ENCODE measurements at regions of chr15 and their contacts with region 1.

Region 1: DNA sequence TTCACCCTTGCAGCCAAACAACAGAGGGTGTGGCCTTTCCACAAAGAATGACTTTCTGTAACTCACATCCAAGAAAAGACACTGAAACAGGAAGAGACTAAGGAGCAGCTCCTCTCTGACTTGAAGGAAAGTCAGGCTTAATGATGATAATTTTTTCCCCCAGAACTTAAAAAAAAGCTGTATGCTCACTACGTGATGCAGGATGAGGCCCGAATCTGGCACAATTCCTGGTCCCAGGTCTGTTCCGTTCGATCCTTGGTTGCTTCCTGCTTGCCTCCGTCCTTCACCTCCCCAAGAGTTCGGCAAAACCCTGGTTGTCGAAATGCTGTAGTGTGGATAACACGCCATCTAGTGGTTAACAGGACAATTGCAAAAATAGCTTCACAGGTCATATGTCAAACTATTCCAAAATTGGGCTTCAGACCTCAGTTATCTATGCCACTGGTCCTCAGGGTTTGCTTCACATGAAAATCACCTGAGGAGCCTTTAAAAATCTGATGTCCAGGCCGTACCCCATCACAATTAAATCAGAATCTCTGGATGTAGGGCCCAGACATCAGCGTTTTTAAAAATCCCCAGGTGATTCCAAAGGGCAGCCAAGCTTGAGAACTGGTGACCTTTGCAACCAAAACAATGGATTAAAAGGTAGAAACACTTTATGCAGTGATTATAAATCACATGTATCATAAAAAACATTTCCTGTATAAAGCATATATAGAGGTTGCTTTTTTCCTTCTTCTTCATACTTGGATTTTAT is 28.1 kb upstream of the SYNM start:
- DNase-seq: peak; percentile 84
- H3K4me3 ChIP-seq: peak overlapping the region; percentile 59
- H3K27ac ChIP-seq: no peak overlapping the region
- H3K4me1 ChIP-seq: peaks cover 8% of the 10 kb centered on the region
- CTCF ChIP-seq: peak; percentile 94

Region 2: GRCh38 chr15:98442379-98442833 is 634.3 kb before region 1 on chr15:
- CTCF ChIA-PET with region 1: no interaction called
- POLR2A ChIA-PET with region 1: no interaction called
- intact Hi-C with region 1: loop called (anchors 2 kb)
- DNase-seq: peak; percentile 57
- H3K4me3 ChIP-seq: no peak overlapping the region
- H3K27ac ChIP-seq: no peak overlapping the region
- H3K4me1 ChIP-seq: no peaks in the 10 kb centered on the region
- CTCF ChIP-seq: peak; percentile 87

Region 3: DNA sequence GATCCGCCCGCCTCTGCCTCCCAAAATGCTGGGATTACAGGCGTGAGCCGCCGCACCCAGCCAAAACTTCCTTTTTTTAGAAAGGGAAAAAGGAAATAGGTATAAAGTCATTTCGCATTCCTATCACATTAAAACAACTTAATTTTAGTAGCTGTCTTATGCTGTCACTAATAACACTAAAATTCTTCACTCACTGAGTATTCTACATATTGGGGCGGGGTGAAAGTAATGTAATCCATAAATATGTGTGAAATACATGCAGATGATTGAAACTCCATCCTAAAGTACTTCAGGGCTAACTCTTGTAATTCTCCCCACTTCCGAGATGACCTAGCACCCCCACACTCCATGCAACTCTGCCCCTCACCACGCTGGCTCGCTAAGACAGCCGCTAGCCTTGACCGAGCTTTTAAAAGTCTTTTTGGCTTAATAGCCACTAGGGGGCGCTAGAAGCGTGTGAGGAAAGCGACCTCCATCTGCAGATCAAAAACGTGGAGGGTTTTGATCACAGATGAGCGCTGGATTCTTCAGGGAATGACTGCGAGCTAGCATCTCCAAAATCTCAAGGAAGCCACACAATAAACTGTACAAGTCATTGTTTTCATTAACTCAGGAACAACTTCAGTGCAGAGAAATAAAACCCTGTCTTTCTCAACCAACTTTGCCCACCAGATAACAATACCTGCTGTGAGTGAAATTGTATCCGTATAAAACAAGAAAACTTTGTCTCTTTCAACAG is 557.7 kb before region 1 on chr15:
- CTCF ChIA-PET with region 1: no interaction called
- POLR2A ChIA-PET with region 1: no interaction called
- intact Hi-C with region 1: loop called (anchors 1 kb)
- DNase-seq: peak; percentile 75
- H3K4me3 ChIP-seq: no peak overlapping the region
- H3K27ac ChIP-seq: no peak overlapping the region
- H3K4me1 ChIP-seq: no peaks in the 10 kb centered on the region
- CTCF ChIP-seq: peak; percentile 91

Region 4: DNA sequence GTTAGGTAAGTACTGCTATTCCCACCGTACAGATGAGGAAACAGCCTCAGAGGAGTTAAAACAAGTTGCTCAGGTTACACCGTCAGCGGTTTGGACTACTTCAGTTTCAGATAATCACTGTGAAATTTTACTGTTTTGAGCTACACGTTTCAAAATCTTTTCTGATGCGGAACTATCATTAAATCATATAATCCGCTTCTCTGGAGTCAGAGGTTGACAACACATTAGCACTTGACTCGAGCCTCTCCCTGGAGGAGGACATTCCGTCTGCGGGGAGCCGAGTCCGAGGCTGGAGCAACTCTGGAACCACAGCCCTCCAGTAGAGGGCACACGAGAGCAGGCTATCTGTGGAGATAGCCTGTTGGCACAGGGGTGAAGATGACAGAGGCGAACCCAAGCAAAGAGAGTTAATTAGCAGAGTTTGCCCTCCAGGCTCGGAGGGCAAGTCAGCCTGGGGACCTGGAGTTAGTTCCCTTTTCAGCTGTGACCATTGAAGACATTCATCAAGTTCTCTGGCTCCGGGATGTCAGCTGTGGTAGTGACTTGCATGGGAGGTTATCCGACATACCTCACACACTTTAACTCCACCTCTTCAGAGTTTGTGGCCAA is 297.2 kb before region 1 on chr15:
- CTCF ChIA-PET with region 1: interaction called, 3 read pairs
- POLR2A ChIA-PET with region 1: no interaction called
- intact Hi-C with region 1: loop called (anchors 1 kb)
- DNase-seq: peak; percentile 55
- H3K4me3 ChIP-seq: no peak overlapping the region
- H3K27ac ChIP-seq: no peak overlapping the region
- H3K4me1 ChIP-seq: no peaks in the 10 kb centered on the region
- CTCF ChIP-seq: peak; percentile 95

Region 5: GRCh38 chr15:99059010-99059981 is 17.4 kb before region 1 on chr15:
- CTCF ChIA-PET with region 1: no interaction called
- POLR2A ChIA-PET with region 1: no interaction called
- intact Hi-C with region 1: no loop called
- DNase-seq: no peak
- H3K4me3 ChIP-seq: no peak overlapping the region
- H3K27ac ChIP-seq: no peak overlapping the region
- H3K4me1 ChIP-seq: no peaks in the 10 kb centered on the region
- CTCF ChIP-seq: peak; percentile 24; the same call in 1 of the 2 replicates

Region 6: GRCh38 chr15:99169769-99170311 is 93.1 kb after region 1 on chr15:
- CTCF ChIA-PET with region 1: no interaction called
- POLR2A ChIA-PET with region 1: no interaction called
- intact Hi-C with region 1: no loop called
- DNase-seq: no peak
- H3K4me3 ChIP-seq: no peak overlapping the region
- H3K27ac ChIP-seq: no peak overlapping the region
- H3K4me1 ChIP-seq: peaks cover 13% of the 10 kb centered on the region
- CTCF ChIP-seq: no peak

Region 7: DNA sequence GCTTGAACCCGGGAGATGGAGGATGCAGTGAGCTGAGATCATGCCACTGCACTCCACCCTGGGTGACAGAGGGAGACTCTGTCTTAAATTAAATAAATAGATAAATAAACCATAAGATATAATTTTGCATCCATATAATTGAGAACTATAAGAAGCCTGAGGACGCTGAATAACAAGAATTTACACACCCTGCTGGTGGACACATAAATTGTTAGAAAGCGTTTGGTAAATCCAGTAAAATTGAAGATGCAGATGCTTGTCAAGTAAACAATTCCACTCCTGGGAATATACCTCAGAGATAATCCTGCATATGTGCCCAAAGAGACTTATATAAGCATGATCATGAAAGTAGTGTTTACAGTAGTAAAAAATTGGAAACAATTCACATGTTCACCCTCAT is 130.9 kb after region 1 on chr15:
- CTCF ChIA-PET with region 1: no interaction called
- POLR2A ChIA-PET with region 1: interaction called, 11 read pairs
- intact Hi-C with region 1: no loop called
- DNase-seq: no peak
- H3K4me3 ChIP-seq: no peak overlapping the region
- H3K27ac ChIP-seq: no peak overlapping the region
- H3K4me1 ChIP-seq: no peaks in the 10 kb centered on the region
- CTCF ChIP-seq: no peak

Region 8: GRCh38 chr15:99213187-99213811 is 136.6 kb after region 1 on chr15:
- CTCF ChIA-PET with region 1: no interaction called
- POLR2A ChIA-PET with region 1: no interaction called
- intact Hi-C with region 1: loop called (anchors 1 kb)
- DNase-seq: peak; percentile 58
- H3K4me3 ChIP-seq: no peak overlapping the region
- H3K27ac ChIP-seq: no peak overlapping the region
- H3K4me1 ChIP-seq: no peaks in the 10 kb centered on the region
- CTCF ChIP-seq: peak; percentile 93

Region 9: DNA sequence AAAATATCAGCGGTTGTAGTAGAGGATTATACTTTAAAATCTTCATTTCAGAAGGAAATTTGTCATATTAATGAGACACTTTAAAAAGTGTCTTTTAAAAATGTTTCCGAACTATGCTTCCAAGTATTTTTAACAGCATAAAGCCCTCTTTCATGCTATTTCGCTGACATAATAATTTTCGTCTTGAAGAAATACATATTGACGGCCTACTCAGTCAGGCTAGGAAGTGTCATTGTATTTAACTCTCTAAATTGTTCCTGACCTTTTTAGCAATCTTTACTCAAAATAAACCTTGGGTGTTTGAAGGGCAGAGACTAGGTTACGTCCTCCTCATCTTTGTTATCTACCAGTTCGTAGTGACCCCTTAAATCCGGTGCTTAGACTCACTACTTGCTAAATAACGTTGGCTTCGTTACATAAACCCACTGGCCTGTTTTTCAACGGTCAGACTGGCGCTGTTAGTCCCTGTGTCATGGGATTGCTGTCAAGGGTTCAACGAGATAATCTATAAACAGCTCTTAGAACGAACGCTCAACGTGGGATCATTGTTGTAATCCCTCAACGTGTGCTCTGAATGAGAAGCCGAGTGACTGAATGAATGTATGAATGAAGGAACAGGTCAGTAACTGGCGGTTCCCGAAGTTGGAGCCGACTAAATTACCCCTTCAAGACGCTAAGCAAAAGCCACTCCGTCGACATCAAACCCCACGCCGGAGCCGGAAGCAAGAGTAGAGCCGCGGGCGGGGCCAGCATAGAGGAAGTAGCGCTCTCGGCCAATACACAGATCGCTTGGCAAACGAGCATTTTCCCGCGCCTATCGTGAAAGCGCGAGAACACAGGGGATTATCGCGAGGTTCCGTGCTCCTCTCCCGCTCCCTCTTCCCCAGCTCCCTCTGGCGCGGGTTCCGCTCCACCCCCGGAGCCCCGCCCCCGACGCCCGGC is 174.0 kb after region 1 on chr15:
- CTCF ChIA-PET with region 1: no interaction called
- POLR2A ChIA-PET with region 1: no interaction called
- intact Hi-C with region 1: no loop called
- DNase-seq: peak; percentile 99
- H3K4me3 ChIP-seq: peak overlapping the region; percentile 97
- H3K27ac ChIP-seq: peak overlapping the region; percentile 88
- H3K4me1 ChIP-seq: peaks cover 30% of the 10 kb centered on the region
- CTCF ChIP-seq: no peak

Measured in OCI-LY7 (cell line).